ENCODE measurements at regions of chr1 and their contacts with region 1.

Region 1: DNA sequence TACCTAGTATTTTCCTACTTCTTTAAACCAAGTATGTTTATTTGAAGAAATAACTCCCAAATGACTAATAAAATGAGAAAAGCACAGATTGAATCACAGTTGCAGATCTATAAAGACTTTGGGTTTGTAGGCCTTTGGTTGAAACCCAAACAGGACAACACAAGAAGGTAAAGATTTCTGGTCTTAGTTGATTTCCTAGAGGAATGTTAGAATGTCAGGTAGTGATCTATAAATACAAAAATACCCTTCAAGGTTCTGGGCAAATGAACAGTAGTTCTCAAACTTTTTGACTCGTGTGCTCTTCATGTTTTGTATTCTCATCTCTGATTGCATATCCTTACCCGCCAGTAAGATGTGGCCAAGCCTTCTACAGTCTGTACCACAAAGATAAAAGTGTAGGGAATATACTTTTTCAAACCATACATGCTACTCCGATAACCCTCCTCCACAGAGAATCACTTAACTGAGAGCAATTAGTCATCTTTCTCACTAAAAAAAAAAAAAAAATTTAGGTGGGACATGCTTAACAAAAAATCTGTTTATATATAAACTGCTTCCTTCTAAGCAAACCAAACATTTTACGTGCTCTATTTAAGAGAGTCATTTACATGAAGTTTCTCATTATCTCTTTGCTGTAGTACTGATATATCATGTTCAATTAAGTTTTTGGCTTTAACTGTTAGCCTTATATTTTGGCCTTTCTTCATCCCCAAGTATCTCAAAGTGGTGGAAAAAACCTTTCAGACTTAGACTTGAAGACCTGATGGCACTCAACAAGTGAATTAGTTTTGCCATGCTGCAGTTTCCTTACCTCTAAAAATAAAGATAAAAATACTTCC is 36.0 kb downstream of the CNIH4 start:
- DNase-seq: no peak
- ATAC-seq: no peak

Region 2: DNA sequence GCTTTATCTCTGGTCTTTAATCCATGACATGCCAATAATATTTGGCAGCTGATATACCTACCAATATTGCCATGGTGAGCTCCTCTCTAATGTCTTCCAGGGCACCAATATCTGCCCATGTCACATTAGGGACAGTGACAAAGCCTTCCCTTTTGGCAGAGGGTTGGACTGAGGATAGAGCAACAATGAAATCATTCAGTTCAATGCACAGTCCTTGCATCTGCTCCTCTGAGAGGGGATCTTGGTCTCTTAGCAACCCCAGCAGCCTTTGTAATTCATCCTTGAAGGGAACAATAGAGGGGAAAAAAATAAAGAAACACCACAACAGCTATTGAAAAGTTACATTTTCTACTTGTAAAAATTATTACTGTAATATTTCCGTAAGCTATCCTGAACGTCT is 104.9 kb before region 1 on chr1:
- intact Hi-C with region 1: loop called (anchors 10 kb)
- DNase-seq: no peak
- ATAC-seq: no peak

Region 3: DNA sequence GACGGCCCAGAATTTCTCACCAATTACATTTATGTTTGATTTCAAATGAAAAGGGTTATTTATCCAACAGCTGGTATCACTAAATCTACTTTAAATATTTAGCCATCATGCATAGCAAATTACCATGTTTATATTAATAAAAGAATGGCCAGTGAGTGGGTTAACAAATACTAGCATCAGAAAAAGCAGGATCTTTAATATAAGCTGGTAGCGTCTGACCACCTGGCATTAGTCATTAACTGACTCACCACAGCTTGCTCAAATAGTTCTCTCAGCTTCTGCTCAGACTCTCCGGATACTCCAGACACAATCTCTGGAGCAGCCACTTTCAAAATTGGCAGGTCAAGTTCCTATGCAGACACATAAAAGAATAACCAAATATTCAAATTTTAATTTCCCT is 92.3 kb before region 1 on chr1:
- intact Hi-C with region 1: no loop called
- DNase-seq: no peak
- ATAC-seq: no peak